Heart left ventricle (tissue), 16 donors: ENCODE measurements at regions of chr11 and their contacts with region 1.

Region 1: DNA sequence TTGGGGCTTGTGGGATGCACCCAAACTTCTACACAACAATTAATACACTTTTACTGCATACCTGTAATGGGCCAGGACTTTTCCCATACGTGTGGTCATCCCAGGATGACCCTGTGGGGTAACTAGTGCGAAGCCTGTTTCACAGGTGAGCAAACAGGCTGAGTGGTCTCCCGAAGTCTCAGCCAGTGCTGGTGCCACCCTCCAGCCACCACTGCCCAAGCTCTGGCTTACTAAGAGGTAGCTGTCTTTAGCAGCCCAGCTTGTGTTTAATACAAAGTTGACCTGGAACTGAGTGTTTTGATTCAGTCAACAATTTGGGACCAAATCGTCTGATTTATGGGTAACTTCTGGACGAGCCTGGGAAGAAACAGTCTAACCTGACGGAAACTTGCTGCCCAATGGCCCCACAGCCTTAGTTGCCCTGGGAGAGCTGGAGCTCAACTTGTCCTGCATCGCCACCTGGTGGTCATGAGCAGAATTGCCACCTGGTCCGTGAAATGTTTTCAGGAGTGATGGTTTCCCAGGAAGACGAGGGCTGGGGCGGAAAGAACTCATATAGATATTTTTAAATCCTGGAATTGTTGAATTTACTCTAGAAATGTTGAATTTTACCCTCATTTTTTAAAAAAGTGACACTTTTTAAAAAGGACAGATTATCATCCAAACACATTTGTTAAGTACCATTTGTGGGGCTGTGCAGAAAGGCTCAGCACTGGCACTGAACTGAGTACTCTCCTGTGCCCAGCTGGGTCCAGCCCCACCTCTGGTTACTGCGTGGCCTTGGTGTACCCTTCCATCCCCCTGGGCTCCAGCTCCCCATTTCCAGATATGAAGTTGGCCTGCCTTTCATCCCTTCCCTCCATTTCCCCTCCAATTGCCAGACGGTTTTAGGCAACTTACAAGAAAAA is 95.5 kb upstream of the PARVA start:
- DNase-seq: peak; percentile 78 to 89 (median 81)
- ATAC-seq: peak in 3 of 4 donors; percentile 66 to 75 (median 70)
- H3K4me3 ChIP-seq: no peak overlapping the region
- H3K27ac ChIP-seq: no peak overlapping the region
- H3K4me1 ChIP-seq: peaks cover 0 to 24% (median 9%) of the 10 kb centered on the region in 12 donors
- H3K27me3 ChIP-seq: no peaks in the 10 kb centered on the region
- CTCF ChIP-seq: peak; percentile 92 to 98 (median 96)
- POLR2A ChIP-seq: no peak

Region 2: DNA sequence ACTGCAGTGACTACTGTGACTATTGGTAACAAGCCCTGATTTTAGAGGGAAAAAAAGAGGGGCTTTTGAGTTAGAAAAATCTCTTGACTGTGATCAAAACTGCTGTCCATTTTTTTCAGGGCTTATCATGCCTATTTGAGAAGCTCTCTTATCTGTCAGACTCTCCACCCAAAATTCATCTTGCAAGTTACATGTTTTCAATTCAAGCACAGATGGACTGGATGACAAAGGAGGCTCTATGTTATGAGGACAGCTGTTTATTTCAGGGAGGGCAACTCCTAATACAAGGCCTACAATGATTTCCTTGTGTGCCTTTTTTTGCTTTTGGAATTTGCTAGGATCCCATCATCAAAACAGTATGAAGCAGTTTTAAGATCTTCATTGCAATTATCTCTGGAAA is 475.2 kb before region 1 on chr11:
- intact Hi-C with region 1: loop called in 3 of 10 experiments (anchors 5 to 10 kb)
- DNase-seq: no peak
- ATAC-seq: peak in 3 of 4 donors; percentile 37 to 56 (median 41)
- H3K4me3 ChIP-seq: no peak overlapping the region
- H3K27ac ChIP-seq: peak overlapping the region in 8 of 12 donors; percentile 8 to 57 (median 29)
- H3K4me1 ChIP-seq: peaks cover 0 to 29% (median 6%) of the 10 kb centered on the region in 12 donors
- H3K27me3 ChIP-seq: no peaks in the 10 kb centered on the region
- CTCF ChIP-seq: no peak
- POLR2A ChIP-seq: no peak

Region 3: GRCh38 chr11:11931461-11932055 is 350.3 kb before region 1 on chr11:
- intact Hi-C with region 1: loop called in 9 of 10 experiments (anchors 5 to 10 kb)
- DNase-seq: peak in 1 of 5 donors; percentile 9
- ATAC-seq: peak in 3 of 4 donors; percentile 47 to 69 (median 63)
- H3K4me3 ChIP-seq: no peak overlapping the region
- H3K27ac ChIP-seq: peak overlapping the region in 1 of 12 donors; percentile 14
- H3K4me1 ChIP-seq: peaks cover 0 to 10% (median under 1%) of the 10 kb centered on the region in 12 donors
- H3K27me3 ChIP-seq: no peaks in the 10 kb centered on the region
- CTCF ChIP-seq: peak; percentile 56 to 82 (median 69)
- POLR2A ChIP-seq: no peak

Region 4: GRCh38 chr11:12043959-12044819 is 237.6 kb before region 1 on chr11:
- intact Hi-C with region 1: loop called (anchors 1 to 2 kb)
- DNase-seq: peak; percentile 80 to 88 (median 81)
- ATAC-seq: peak; percentile 82 to 90 (median 88)
- H3K4me3 ChIP-seq: peak overlapping the region in 3 of 12 donors; percentile 3 to 12 (median 8)
- H3K27ac ChIP-seq: peak overlapping the region in 11 of 12 donors; percentile 31 to 78 (median 66)
- H3K4me1 ChIP-seq: peaks cover 0 to 23% (median 17%) of the 10 kb centered on the region in 12 donors
- H3K27me3 ChIP-seq: no peaks in the 10 kb centered on the region
- CTCF ChIP-seq: peak; percentile 89 to 98 (median 93)
- POLR2A ChIP-seq: no peak

Region 5: GRCh38 chr11:12087075-12088004 is 194.5 kb before region 1 on chr11:
- intact Hi-C with region 1: loop called in 4 of 10 experiments (anchors 2 to 10 kb)
- DNase-seq: no peak
- ATAC-seq: peak in 2 of 4 donors; percentile 11 to 16
- H3K4me3 ChIP-seq: peak overlapping the region in 2 of 12 donors; percentile 13 to 20
- H3K27ac ChIP-seq: peak overlapping the region; percentile 73 to 96 (median 85)
- H3K4me1 ChIP-seq: peaks cover 12 to 75% (median 65%) of the 10 kb centered on the region in 12 donors
- H3K27me3 ChIP-seq: no peaks in the 10 kb centered on the region
- CTCF ChIP-seq: no peak
- POLR2A ChIP-seq: no peak

Region 6: GRCh38 chr11:12642040-12642439 is 360.2 kb after region 1 on chr11:
- intact Hi-C with region 1: no loop called
- DNase-seq: no peak
- ATAC-seq: peak in 2 of 4 donors; percentile 27 to 48
- H3K4me3 ChIP-seq: no peak overlapping the region
- H3K27ac ChIP-seq: no peak overlapping the region
- H3K4me1 ChIP-seq: peaks cover 0 to 12% (median 2%) of the 10 kb centered on the region in 12 donors
- H3K27me3 ChIP-seq: no peaks in the 10 kb centered on the region
- CTCF ChIP-seq: no peak
- POLR2A ChIP-seq: no peak

Region 7: GRCh38 chr11:13183094-13183825 is 901.4 kb after region 1 on chr11:
- intact Hi-C with region 1: loop called in 1 of 10 experiments (anchors 10 kb)
- DNase-seq: no peak
- ATAC-seq: peak in 2 of 4 donors; percentile 36 to 63
- H3K4me3 ChIP-seq: peak overlapping the region in 8 of 12 donors; percentile 5 to 40 (median 20)
- H3K27ac ChIP-seq: no peak overlapping the region
- H3K4me1 ChIP-seq: peaks cover 0 to 8% (median 4%) of the 10 kb centered on the region in 12 donors
- H3K27me3 ChIP-seq: no peaks in the 10 kb centered on the region
- CTCF ChIP-seq: peak in 11 of 12 donors; percentile 20 to 62 (median 44)
- POLR2A ChIP-seq: no peak